ENCODE measurements at regions of chr1 and their contacts with region 1.

Region 1: DNA sequence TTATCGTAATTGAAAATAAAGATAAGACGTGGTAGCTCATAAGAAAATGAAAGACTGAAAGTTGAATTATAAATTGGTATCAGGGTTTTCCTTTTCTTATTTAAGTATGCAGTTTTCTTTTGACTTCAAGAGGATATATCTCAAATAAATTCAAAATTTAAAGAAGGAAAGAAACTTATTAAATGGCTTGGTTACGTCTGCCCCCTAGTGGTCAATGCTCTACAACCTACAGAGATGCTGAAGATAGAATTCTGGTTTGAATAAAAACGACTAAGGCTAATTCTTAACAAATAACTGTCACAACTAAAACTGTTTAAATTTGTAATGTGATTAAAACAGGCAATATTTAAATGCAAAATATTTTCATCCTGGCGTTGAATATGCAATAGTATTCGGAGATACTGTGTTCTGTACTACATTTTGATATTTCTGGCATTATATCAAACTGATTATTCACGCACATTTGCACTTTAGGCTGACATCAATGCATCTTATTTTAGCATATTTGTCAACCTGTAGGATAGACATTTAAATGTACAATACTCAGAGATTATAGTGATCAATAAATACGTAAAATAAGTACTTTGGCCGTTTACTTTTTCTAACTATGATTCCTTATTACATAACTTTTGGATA is 26.8 kb downstream of the IFI44 start:
- DNase-seq: peak; percentile 75
- H3K4me3 Mint-ChIP-seq: no peak overlapping the region
- H3K27ac Mint-ChIP-seq: no peak overlapping the region
- H3K4me1 Mint-ChIP-seq: peaks cover 6% of the 10 kb centered on the region
- H3K27me3 Mint-ChIP-seq: peaks cover 3% of the 10 kb centered on the region

Region 2: GRCh38 chr1:78126506-78126905 is 550.0 kb before region 1 on chr1:
- CTCF ChIA-PET with region 1: interaction called, 4 read pairs
- intact Hi-C with region 1: loop called (anchors 1 kb)
- DNase-seq: no peak
- H3K4me3 Mint-ChIP-seq: no peak overlapping the region
- H3K27ac Mint-ChIP-seq: no peak overlapping the region
- H3K4me1 Mint-ChIP-seq: no peaks in the 10 kb centered on the region
- H3K27me3 Mint-ChIP-seq: no peaks in the 10 kb centered on the region

Region 3: GRCh38 chr1:78145105-78145580 is 531.3 kb before region 1 on chr1:
- CTCF ChIA-PET with region 1: interaction called, 3 read pairs
- intact Hi-C with region 1: loop called (anchors 1 kb)
- DNase-seq: peak; percentile 60
- H3K4me3 Mint-ChIP-seq: no peak overlapping the region
- H3K27ac Mint-ChIP-seq: no peak overlapping the region
- H3K4me1 Mint-ChIP-seq: peaks cover 21% of the 10 kb centered on the region
- H3K27me3 Mint-ChIP-seq: peaks cover 3% of the 10 kb centered on the region

Region 4: GRCh38 chr1:78333502-78333901 is 343.0 kb before region 1 on chr1:
- CTCF ChIA-PET with region 1: no interaction called
- intact Hi-C with region 1: loop called (anchors 1 kb)
- DNase-seq: peak; percentile 8
- H3K4me3 Mint-ChIP-seq: no peak overlapping the region
- H3K27ac Mint-ChIP-seq: no peak overlapping the region
- H3K4me1 Mint-ChIP-seq: no peaks in the 10 kb centered on the region
- H3K27me3 Mint-ChIP-seq: peaks cover 2% of the 10 kb centered on the region

Region 5: GRCh38 chr1:78617615-78618026 is 58.8 kb before region 1 on chr1:
- CTCF ChIA-PET with region 1: interaction called, 88 read pairs
- intact Hi-C with region 1: loop called (anchors 1 kb)
- DNase-seq: peak; percentile 66
- H3K4me3 Mint-ChIP-seq: no peak overlapping the region
- H3K27ac Mint-ChIP-seq: no peak overlapping the region
- H3K4me1 Mint-ChIP-seq: peaks cover 30% of the 10 kb centered on the region
- H3K27me3 Mint-ChIP-seq: no peaks in the 10 kb centered on the region

Region 6: GRCh38 chr1:78649628-78650027 is 26.8 kb before region 1 on chr1 and contains the start of gene IFI44:
- CTCF ChIA-PET with region 1: interaction called, 6 read pairs
- intact Hi-C with region 1: loop called (anchors 1 kb)
- DNase-seq: peak; percentile 87
- H3K4me3 Mint-ChIP-seq: peak within 1 kb of the TSS; percentile 87
- H3K27ac Mint-ChIP-seq: peak within 1 kb of the TSS; percentile 74
- H3K4me1 Mint-ChIP-seq: peaks cover 50% of the 10 kb centered on the region
- H3K27me3 Mint-ChIP-seq: no peaks in the 10 kb centered on the region
- total RNA-seq, gene IFI44: 40.1 to 42.3 TPM

Region 7: DNA sequence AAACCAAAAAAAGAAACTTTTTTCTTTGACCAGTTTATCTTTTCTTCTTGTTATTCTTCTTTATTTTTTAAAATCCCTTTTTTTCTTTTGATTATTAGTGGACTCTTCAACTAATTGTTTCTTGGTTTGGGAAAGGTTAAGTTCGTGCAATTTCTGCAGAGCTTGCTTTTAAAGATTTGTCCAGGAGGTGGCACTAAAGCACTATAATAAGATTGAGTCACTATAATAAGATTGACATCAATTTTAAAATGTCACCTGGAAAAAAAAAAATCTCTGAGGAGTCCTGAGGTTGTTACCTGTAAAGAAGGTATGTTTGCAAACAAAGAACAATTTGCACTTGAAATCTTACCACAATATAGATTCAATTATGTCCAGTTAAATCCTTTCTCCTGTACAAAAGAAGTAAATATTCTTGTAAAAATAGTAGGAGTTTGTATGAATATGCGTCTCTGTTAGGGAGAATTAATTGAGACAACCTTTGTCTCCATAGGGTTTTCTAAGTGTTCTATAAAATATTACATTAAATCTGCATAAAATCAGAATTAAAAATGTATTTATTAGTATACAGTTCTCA is 163.3 kb after region 1 on chr1:
- CTCF ChIA-PET with region 1: no interaction called
- intact Hi-C with region 1: loop called (anchors 5 kb)
- DNase-seq: peak; percentile 30
- H3K4me3 Mint-ChIP-seq: no peak overlapping the region
- H3K27ac Mint-ChIP-seq: no peak overlapping the region
- H3K4me1 Mint-ChIP-seq: peaks cover 11% of the 10 kb centered on the region
- H3K27me3 Mint-ChIP-seq: no peaks in the 10 kb centered on the region

Region 8: DNA sequence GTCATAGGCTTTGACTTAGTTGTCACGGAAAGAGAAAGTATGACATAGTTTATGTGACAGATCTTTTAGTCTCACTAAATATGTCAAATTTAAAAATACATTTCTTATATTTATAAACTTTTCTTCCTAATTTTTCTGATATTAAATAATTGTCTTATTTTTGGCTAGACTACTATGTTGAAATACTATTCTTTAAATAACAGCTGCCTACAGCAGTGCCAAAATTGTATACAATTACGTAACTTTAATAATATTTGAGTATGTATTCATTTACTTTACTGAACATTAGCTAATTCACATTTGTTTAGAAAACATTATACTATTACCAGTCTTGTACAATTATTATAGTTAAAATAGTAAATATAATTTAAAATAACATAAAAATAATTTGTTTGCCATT is 192.7 kb after region 1 on chr1:
- CTCF ChIA-PET with region 1: no interaction called
- intact Hi-C with region 1: no loop called
- DNase-seq: no peak
- H3K4me3 Mint-ChIP-seq: no peak overlapping the region
- H3K27ac Mint-ChIP-seq: no peak overlapping the region
- H3K4me1 Mint-ChIP-seq: no peaks in the 10 kb centered on the region
- H3K27me3 Mint-ChIP-seq: peaks cover 5% of the 10 kb centered on the region

Region 9: DNA sequence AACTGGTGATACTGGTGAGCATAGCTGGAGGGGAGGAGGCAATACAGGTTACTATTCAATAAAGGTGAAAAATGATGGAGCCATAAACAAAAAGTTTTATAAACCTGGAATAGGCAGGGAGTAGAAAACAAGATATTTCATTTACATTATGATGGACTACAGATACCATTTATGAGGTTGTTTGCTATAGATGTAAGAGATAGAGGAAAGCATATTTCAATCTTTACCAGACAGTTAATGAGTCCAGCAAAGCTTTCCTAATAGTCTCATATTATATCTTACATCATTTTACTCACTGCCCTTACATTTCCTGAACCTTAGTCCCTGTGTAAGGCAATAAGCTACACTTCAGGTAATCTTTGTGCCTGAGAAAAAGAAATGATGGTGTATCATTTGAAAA is 1454.3 kb after region 1 on chr1:
- CTCF ChIA-PET with region 1: no interaction called
- intact Hi-C with region 1: no loop called
- DNase-seq: no peak
- H3K4me3 Mint-ChIP-seq: no peak overlapping the region
- H3K27ac Mint-ChIP-seq: no peak overlapping the region
- H3K4me1 Mint-ChIP-seq: no peaks in the 10 kb centered on the region
- H3K27me3 Mint-ChIP-seq: no peaks in the 10 kb centered on the region